Vagina (tissue), 2 donors: ENCODE measurements at regions of chr16 and their contacts with region 1.

Region 1: GRCh38 chr16:5438591-5438990 is 341.0 kb upstream of the EEF2KMT start:
- DNase-seq: no peak
- H3K4me3 ChIP-seq: no peak overlapping the region
- H3K27ac ChIP-seq: no peak overlapping the region
- H3K4me1 ChIP-seq: no peaks in the 10 kb centered on the region
- H3K27me3 ChIP-seq: no peaks in the 10 kb centered on the region
- CTCF ChIP-seq: no peak
- POLR2A ChIP-seq: no peak

Region 2: DNA sequence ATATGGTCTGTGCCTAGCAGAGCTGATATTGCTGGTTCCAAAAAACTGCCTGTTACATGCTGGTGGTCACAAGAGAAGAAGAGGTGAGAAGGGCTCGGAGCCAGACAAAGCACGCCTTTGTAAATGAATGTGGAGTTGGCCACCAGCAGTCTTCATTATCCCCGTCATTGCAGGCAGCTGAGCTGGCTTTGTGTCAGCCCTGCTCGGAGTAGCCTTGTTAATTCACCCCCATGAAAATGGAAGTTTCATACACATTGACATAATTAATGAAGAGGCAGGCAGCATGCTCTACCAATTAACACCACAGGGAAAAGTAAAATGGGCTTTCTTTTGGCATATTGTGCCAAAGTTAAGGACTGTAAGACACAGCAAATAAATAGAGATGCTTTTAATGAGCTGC is 1780.3 kb after region 1 on chr16:
- intact Hi-C with region 1: loop called (anchors 5 kb)
- DNase-seq: no peak
- H3K4me3 ChIP-seq: no peak overlapping the region
- H3K27ac ChIP-seq: no peak overlapping the region
- H3K4me1 ChIP-seq: no peaks in the 10 kb centered on the region
- H3K27me3 ChIP-seq: no peaks in the 10 kb centered on the region
- CTCF ChIP-seq: no peak
- POLR2A ChIP-seq: no peak